HCT116 (cell line): ENCODE measurements at regions of chr7 and their contacts with region 1.

Region 1: GRCh38 chr7:142811154-142811737 is 40.5 kb downstream of the PRSS2 start:
- DNase-seq: peak; percentile 39
- ATAC-seq: peak; percentile 77
- H3K4me3 ChIP-seq: no peak overlapping the region
- H3K27ac ChIP-seq: no peak overlapping the region
- H3K4me1 ChIP-seq: peaks cover 0 to 24% of the 10 kb centered on the region in 2 experiments; a peak in 3 of 4 replicates
- H3K27me3 ChIP-seq: peaks cover 35% of the 10 kb centered on the region; the same call in 1 of the 2 replicates
- CTCF ChIP-seq: peak; percentile 57 to 80 (median 71)
- POLR2A ChIP-seq: no peak
- RAD21 ChIP-seq: peak; percentile 74

Region 2: GRCh38 chr7:142077762-142078161 is 733.5 kb before region 1 on chr7:
- CTCF ChIA-PET with region 1: no interaction called
- POLR2A ChIA-PET with region 1: no interaction called
- RAD21 ChIA-PET with region 1: no interaction called
- intact Hi-C with region 1: no loop called
- DNase-seq: no peak
- ATAC-seq: no peak
- H3K4me3 ChIP-seq: no peak overlapping the region
- H3K27ac ChIP-seq: no peak overlapping the region
- H3K4me1 ChIP-seq: no peaks in the 10 kb centered on the region
- H3K27me3 ChIP-seq: peaks cover 5% of the 10 kb centered on the region; the same call in 1 of the 2 replicates
- CTCF ChIP-seq: no peak
- POLR2A ChIP-seq: no peak
- RAD21 ChIP-seq: no peak

Region 3: GRCh38 chr7:142603870-142604448 is 207.3 kb before region 1 on chr7:
- CTCF ChIA-PET with region 1: interaction called, 14 read pairs
- POLR2A ChIA-PET with region 1: no interaction called
- RAD21 ChIA-PET with region 1: no interaction called
- intact Hi-C with region 1: loop called (anchors 2 kb)
- DNase-seq: peak; percentile 53
- ATAC-seq: peak; percentile 81
- H3K4me3 ChIP-seq: no peak overlapping the region; a peak in 2 of 4 replicates
- H3K27ac ChIP-seq: no peak overlapping the region
- H3K4me1 ChIP-seq: peaks cover 0 to 7% of the 10 kb centered on the region in 2 experiments; a peak in 1 of 4 replicates
- H3K27me3 ChIP-seq: no peaks in the 10 kb centered on the region
- CTCF ChIP-seq: peak; percentile 78 to 92 (median 90)
- POLR2A ChIP-seq: no peak
- RAD21 ChIP-seq: peak; percentile 86

Region 4: GRCh38 chr7:142833174-142834048 is 22.2 kb after region 1 on chr7:
- CTCF ChIA-PET with region 1: interaction called, 4 read pairs
- POLR2A ChIA-PET with region 1: no interaction called
- RAD21 ChIA-PET with region 1: no interaction called
- intact Hi-C with region 1: loop called (anchors 2 kb)
- DNase-seq: no peak
- ATAC-seq: peak; percentile 53; the same call in 1 of the 2 replicates
- H3K4me3 ChIP-seq: no peak overlapping the region
- H3K27ac ChIP-seq: no peak overlapping the region
- H3K4me1 ChIP-seq: peaks cover 0 to 3% of the 10 kb centered on the region in 2 experiments; a peak in 1 of 4 replicates
- H3K27me3 ChIP-seq: no peaks in the 10 kb centered on the region
- CTCF ChIP-seq: no peak
- POLR2A ChIP-seq: no peak
- RAD21 ChIP-seq: no peak

Region 5: GRCh38 chr7:143126140-143126539 is 314.9 kb after region 1 on chr7:
- CTCF ChIA-PET with region 1: no interaction called
- POLR2A ChIA-PET with region 1: no interaction called
- RAD21 ChIA-PET with region 1: no interaction called
- intact Hi-C with region 1: no loop called
- DNase-seq: no peak
- ATAC-seq: no peak
- H3K4me3 ChIP-seq: no peak overlapping the region
- H3K27ac ChIP-seq: no peak overlapping the region
- H3K4me1 ChIP-seq: no peaks in the 10 kb centered on the region
- H3K27me3 ChIP-seq: 0 out of 2 replicates have a peak, but pooled peaks cover 6% of the 10 kb centered on the region
- CTCF ChIP-seq: no peak
- POLR2A ChIP-seq: no peak
- RAD21 ChIP-seq: no peak